Ovary (tissue), 10 donors: ENCODE measurements at regions of chr20 and their contacts with region 1.

Region 1: DNA sequence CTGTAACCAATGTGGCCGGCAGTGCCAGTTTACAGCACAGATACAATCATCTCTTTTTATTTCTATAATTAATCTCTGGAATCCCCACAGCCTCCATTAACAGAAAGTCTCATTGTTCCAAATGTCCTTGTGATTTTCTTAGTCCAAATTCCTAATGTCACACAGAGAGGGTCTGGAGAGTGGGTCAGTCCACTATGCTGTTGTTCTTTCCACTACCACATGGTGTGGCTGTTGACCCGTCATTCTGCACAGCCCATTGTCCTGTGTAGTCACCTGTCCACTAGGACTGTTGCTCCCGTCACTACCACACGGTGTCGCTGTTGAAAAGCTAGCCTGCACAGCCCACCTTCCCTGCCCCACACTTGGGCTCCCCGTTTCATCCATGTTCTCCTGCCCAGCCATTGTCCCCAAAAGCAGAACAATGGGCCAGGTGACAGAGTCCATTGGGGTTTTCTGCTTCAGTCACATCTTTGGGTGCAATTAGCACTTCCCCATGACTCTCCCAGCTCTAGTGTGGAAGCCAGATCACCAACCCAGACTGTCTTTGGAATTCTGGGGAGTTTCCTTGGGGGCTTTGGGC is 8.6 kb upstream of the LBP start:
- DNase-seq: peak in 2 of 5 donors; percentile 29 to 55
- H3K4me3 ChIP-seq: no peak overlapping the region
- H3K27ac ChIP-seq: no peak overlapping the region
- H3K4me1 ChIP-seq: peaks cover under 1% of the 10 kb centered on the region
- H3K27me3 ChIP-seq: no peaks in the 10 kb centered on the region
- CTCF ChIP-seq: peak in 1 of 3 donors; percentile 15
- EP300 ChIP-seq: no peak
- POLR2A ChIP-seq: no peak

Region 2: DNA sequence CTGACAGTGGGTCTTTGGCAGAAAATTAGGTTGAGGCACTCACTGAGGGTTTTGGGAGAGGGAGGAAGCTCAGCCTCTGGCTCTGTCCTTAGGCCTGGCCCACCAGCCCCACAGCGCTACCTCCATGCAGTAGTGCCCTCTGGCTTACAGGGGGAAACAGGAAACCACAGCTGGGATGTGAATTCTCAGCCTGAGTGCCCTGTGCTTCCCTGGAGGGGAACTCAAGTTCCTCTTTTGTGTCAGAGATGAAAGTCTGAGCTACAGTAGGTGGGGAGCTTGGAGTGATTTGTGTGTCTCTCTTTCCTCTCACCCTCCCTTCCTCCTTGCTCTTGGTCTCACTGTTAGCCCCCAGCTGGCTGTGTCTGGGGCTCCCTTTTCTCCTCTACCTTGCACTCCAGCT is 761.8 kb before region 1 on chr20:
- intact Hi-C with region 1: loop called in 1 of 4 experiments (anchors 10 kb)
- DNase-seq: no peak
- H3K4me3 ChIP-seq: no peak overlapping the region
- H3K27ac ChIP-seq: no peak overlapping the region
- H3K4me1 ChIP-seq: no peaks in the 10 kb centered on the region
- H3K27me3 ChIP-seq: no peaks in the 10 kb centered on the region
- CTCF ChIP-seq: no peak
- EP300 ChIP-seq: no peak
- POLR2A ChIP-seq: no peak

Region 3: GRCh38 chr20:38260378-38261053 is 77.1 kb before region 1 on chr20 and contains the start of gene KIAA1755:
- intact Hi-C with region 1: no loop called
- DNase-seq: peak; percentile 47 to 67 (median 62)
- H3K4me3 ChIP-seq: peak within 1 kb of the TSS; percentile 46
- H3K27ac ChIP-seq: peak within 1 kb of the TSS; percentile 93
- H3K4me1 ChIP-seq: peaks cover 6% of the 10 kb centered on the region
- H3K27me3 ChIP-seq: no peaks in the 10 kb centered on the region
- CTCF ChIP-seq: no peak
- EP300 ChIP-seq: no peak
- POLR2A ChIP-seq: peak; percentile 13
- total RNA-seq, gene KIAA1755: 4.4 to 29.7 (median 16.9) TPM

Region 4: DNA sequence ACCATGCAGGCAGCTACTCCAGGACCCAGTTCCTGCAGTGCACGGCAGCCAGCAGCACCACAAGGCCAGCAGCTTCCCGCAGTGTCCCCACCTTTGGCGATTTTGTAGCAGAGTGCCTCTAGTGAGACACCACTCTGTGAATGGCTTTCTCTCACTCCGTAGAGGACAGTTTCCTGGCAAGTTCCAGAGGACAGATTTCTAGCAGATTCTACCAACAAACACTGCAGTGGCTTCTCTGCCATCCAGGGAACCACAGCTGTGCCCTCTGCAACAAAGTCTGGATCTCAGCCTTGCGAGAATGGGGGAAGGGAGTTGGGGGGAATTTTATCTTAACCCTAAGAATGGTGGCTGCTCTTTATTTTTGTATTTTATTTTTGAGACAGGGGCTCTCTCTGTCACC is 68.8 kb after region 1 on chr20:
- intact Hi-C with region 1: loop called in 3 of 4 experiments (anchors 10 kb)
- DNase-seq: no peak
- H3K4me3 ChIP-seq: no peak overlapping the region
- H3K27ac ChIP-seq: no peak overlapping the region
- H3K4me1 ChIP-seq: peaks cover 1% of the 10 kb centered on the region
- H3K27me3 ChIP-seq: no peaks in the 10 kb centered on the region
- CTCF ChIP-seq: no peak
- EP300 ChIP-seq: no peak
- POLR2A ChIP-seq: no peak

Region 5: DNA sequence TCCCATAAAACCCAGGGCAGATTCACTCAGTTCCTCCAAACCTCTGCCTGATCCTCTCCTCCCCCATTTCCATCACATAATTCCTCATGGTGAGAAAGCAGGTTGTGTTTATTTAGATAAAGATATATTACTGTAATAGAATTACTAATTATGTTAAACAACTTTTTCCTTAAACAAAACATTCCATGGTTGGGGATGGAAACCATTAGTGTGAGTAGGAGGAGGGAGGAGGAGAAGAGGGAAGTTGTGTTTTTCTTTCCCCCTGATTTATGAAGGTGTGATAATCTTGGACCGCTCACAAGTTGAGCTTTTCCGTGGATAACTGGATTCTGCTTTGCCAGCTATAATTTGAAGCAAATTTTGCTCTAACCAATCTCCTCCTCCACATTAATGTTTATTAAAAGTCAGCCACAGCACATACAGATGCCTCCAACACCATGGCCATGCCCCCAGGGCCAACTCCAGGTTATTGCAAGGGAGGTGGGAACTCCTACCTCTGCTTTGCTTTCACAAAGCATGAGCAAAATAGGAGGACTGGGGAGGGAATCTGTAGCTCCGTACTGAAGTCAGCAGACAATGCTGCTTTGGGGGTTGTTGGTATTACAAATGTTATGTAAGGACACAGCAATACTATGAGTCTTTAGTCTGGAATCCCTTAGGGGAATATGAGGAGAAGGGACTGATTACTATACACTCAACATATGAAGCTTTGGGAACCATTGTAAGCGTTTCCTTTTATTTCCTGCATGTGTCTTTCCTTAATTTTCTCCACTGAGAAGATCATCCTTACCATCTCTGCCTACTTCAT is 1166.5 kb after region 1 on chr20:
- intact Hi-C with region 1: no loop called
- DNase-seq: no peak
- H3K4me3 ChIP-seq: no peak overlapping the region
- H3K27ac ChIP-seq: no peak overlapping the region
- H3K4me1 ChIP-seq: no peaks in the 10 kb centered on the region
- H3K27me3 ChIP-seq: no peaks in the 10 kb centered on the region
- CTCF ChIP-seq: no peak
- EP300 ChIP-seq: no peak
- POLR2A ChIP-seq: no peak